Left cardiac atrium (tissue), 4 donors: ENCODE measurements at regions of chr10 and their contacts with region 1.

Region 1: DNA sequence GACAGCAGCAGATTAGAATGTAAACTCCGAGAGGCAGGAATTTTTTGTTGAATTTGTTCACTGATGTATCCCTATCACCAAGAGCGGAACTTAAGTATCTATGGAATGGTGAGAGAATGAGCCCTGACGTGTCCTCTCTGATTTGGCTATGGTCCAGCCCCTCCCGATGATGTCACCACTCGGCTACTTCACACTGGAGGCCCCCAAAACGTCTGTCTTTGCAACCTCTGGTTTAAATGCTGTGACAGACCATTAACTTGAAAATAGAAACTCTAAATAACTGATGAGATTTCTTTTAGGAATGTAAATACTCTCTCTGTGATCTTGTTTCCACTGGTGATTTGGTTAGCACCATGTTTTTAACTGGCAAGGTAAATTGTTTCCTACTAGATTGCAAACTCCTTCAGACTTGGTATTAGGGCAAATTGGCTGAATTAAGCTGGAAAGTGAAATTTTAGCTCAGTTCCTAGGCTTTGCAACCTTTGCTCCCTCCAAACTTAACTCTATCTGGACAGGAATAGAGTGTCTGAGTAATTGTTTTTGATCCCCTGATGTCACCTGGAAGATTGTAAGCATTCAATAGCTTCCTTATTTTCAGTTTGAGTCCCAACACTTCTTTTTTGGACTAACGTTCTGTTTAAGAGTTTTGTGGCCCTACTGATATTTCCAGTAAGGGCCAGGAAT is 19.1 kb downstream of the SLC16A12 start:
- DNase-seq: peak; percentile 79
- ATAC-seq: peak; percentile 74 to 79

Region 2: DNA sequence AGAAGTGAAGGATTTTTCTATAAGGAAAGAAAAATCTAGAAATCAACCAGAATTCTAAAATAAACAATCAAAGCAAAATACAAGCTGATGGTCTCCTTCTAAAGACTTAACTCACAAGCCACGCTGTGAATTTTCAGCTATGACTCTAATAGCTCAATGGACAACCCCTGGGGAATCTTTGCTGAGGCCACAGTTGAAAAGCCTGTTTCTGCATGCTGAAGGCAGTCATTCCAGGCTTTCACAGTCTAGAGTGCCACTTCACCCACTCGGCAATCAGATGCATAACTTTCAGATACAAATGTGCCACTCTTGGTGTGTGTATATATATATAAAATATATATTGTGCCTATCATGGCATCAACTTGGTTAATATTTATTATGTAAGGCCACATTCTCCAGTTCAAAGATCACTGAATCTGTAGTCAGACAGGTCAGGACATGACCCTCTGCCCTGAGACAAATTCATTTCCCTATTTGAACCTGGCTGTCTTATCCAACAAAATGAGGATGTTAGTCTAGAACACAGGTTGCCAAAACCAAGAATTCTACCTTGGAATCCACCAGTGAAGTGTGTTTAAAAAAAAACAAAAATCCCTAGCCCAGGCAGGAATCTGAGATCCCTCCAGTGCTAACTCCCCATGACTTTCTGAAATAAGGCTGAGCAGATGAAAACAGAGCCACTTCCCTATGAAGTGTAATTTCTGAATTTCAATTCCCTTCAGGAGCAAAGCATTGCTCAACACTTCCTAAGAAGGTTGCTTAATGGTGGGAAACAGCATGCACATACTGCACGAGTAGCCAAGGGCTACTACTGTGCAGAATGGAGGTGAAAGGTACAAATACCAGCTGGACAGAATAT is 274.6 kb before region 1 on chr10:
- intact Hi-C with region 1: no loop called
- DNase-seq: no peak
- ATAC-seq: peak; percentile 53 to 80

Region 3: DNA sequence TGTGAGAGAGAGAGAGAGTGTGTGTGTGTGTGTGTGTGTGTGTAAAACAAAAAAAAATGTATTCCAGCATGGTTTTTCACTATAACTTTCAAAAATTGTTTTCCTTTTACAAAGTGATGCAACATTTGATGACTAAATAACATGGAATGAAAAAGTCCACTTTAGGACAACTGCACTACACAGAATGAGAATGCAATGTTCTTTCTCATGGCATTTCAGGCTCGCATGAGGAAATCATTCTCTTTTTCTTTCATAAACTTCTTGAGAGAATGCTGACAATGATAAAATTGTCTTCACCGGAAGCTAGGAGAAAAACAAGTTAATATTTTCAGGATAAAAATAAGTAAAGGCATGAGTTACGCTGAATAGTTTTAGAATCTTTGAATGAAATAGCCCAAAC is 34.6 kb before region 1 on chr10:
- intact Hi-C with region 1: loop called in 1 of 2 experiments (anchors 5 kb)
- DNase-seq: no peak
- ATAC-seq: peak; percentile 60